ENCODE measurements at regions of chr17 and their contacts with region 1.

Region 1: GRCh38 chr17:1783834-1784611 is 22.2 kb downstream of the SERPINF1 start:
- DNase-seq: peak; percentile 98 to 99
- ATAC-seq: peak; percentile 80 to 84
- H3K4me3 ChIP-seq: peak overlapping the region; percentile 33 to 43 (median 40)
- H3K27ac ChIP-seq: peak overlapping the region; percentile 97 to 100 (median 98)
- H3K4me1 ChIP-seq: peaks cover 68 to 76% of the 10 kb centered on the region in 2 donors
- H3K27me3 ChIP-seq: no peaks in the 10 kb centered on the region
- CTCF ChIP-seq: peak; percentile 83 to 96 (median 92)
- POLR2A ChIP-seq: peak; percentile 87 to 94

Region 2: GRCh38 chr17:1648963-1649843 is 134.8 kb before region 1 on chr17:
- in situ Hi-C with region 1: loop called in 1 of 4 experiments (anchors 25 kb)
- intact Hi-C with region 1: loop called (anchors 5 kb)
- DNase-seq: peak; percentile 86 to 94
- ATAC-seq: peak; percentile 55 to 66
- H3K4me3 ChIP-seq: peak overlapping the region; percentile 64 to 96 (median 80)
- H3K27ac ChIP-seq: peak overlapping the region; percentile 95 to 100 (median 99)
- H3K4me1 ChIP-seq: peaks cover 33 to 36% of the 10 kb centered on the region in 2 donors
- H3K27me3 ChIP-seq: no peaks in the 10 kb centered on the region
- CTCF ChIP-seq: peak in 2 of 5 experiments; percentile 88 to 98
- POLR2A ChIP-seq: peak; percentile 84 to 86

Region 3: DNA sequence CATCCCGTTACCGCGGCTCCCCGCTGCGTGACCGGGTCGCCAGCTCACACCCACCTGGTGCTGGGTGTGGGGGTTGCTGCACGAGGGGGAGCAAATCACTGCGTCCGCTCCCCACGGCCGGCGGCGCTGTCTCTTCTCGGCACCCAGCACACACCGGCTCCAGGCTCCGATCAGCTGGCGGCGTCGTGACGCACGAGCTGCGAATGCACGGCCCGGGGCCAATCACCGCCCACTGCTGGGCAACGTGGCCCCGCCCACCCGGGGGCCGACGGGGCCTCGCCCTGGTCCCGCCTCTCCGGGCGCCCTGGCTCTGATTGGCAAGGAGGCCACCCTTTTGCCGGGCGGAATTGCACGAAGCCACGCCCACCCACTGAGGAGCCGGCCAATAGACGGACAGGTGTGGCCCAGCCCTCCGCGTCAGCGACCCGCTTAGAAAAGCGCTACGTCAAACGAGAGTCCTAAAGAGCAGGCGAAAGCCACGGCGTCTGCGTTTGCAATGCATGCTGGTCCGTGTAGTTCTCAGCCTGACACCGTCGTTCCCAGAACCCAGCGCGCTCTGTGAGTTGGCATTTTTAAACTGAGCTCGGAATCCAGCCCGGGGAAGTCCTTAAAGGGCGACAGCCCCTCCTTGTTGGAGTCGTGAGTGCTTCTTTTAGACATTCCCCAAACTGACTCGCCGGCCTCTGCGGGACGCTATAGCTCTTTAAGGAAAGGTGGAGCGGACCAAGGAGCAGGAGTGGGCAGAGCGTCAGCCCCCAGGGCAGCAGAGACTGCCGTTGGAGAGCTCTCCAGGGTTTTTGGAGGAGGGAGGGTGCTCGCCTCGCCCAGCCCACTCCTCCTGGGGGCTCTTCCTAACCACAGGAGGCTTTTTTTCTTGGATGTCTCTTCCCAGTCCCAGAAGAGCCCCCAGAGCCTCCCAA is 67.7 kb before region 1 on chr17:
- in situ Hi-C with region 1: loop called (anchors 5 to 10 kb)
- intact Hi-C with region 1: loop called (anchors 1 kb)
- DNase-seq: peak; percentile 100
- ATAC-seq: peak; percentile 47 to 59
- H3K4me3 ChIP-seq: peak overlapping the region; percentile 91 to 95 (median 94)
- H3K27ac ChIP-seq: peak overlapping the region; percentile 99 to 100 (median 100)
- H3K4me1 ChIP-seq: peaks cover 52 to 55% of the 10 kb centered on the region in 2 donors
- H3K27me3 ChIP-seq: no peaks in the 10 kb centered on the region
- CTCF ChIP-seq: no peak
- POLR2A ChIP-seq: peak; percentile 99 to 100

Region 4: GRCh38 chr17:1764284-1764683 is 19.7 kb before region 1 on chr17:
- in situ Hi-C with region 1: no loop called
- intact Hi-C with region 1: loop called (anchors 1 kb)
- DNase-seq: peak; percentile 83
- ATAC-seq: peak; percentile 23 to 42
- H3K4me3 ChIP-seq: peak overlapping the region; percentile 65 to 82 (median 74)
- H3K27ac ChIP-seq: peak overlapping the region; percentile 97 to 100 (median 98)
- H3K4me1 ChIP-seq: peaks cover 40 to 48% of the 10 kb centered on the region in 2 donors
- H3K27me3 ChIP-seq: no peaks in the 10 kb centered on the region
- CTCF ChIP-seq: no peak
- POLR2A ChIP-seq: peak; percentile 53 to 70

Region 5: GRCh38 chr17:1865252-1866037 is 81.4 kb after region 1 on chr17:
- in situ Hi-C with region 1: loop called in 1 of 4 experiments (anchors 10 kb)
- intact Hi-C with region 1: loop called (anchors 5 kb)
- DNase-seq: peak in 1 of 2 donors; percentile 51
- ATAC-seq: no peak
- H3K4me3 ChIP-seq: no peak overlapping the region
- H3K27ac ChIP-seq: peak overlapping the region; percentile 88 to 98 (median 92)
- H3K4me1 ChIP-seq: peaks cover 27% of the 10 kb centered on the region in 2 donors
- H3K27me3 ChIP-seq: no peaks in the 10 kb centered on the region
- CTCF ChIP-seq: peak; percentile 62 to 86 (median 75)
- POLR2A ChIP-seq: no peak

Region 6: DNA sequence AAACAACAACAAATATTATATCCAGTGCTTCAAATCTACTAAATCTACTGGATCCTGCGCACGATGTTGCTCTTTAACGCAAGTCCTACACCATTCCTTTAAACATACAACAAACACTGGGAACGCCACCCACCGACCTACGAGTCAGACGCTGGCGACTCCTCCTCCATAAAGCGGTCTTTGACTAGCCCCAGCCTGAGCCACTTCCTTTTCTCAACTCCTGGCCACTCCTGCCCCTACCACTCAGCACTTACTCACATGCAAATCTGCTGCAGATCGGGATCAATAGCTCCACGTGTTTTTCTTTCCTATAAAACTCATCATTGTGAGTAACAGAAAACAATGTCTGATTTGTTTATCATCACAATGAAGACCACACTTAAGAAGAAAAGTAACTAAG is 649.7 kb after region 1 on chr17:
- in situ Hi-C with region 1: no loop called
- intact Hi-C with region 1: no loop called
- DNase-seq: no peak
- ATAC-seq: no peak
- H3K4me3 ChIP-seq: no peak overlapping the region
- H3K27ac ChIP-seq: no peak overlapping the region
- H3K4me1 ChIP-seq: no peaks in the 10 kb centered on the region
- H3K27me3 ChIP-seq: no peaks in the 10 kb centered on the region
- CTCF ChIP-seq: no peak
- POLR2A ChIP-seq: no peak